ENCODE measurements at regions of chr4 and their contacts with region 1.

Region 1: DNA sequence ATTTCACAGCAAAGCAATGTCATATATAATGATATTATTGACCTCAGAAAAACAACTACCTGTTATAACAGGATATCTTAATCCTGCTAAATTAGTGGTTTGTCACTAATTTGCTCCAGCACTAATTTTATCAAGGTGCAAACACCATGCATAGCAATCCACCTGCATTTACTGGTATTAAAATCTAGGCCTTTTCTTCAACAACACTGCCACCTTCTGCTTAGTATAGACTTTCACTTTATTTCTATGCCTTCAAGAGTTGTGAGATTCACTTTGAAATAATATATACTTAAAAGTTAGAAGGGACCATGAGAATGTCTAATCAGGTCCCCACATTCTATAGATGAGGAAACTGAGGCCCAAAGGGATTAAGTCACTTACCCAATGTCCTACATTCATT is 82.1 kb upstream of the IQCM start:
- ATAC-seq: peak in 4 of 8 experiments; percentile 36 to 65 (median 48)
- H3K4me3 ChIP-seq: no peak overlapping the region
- H3K27ac ChIP-seq: no peak overlapping the region
- H3K4me1 ChIP-seq: peaks cover 0 to 8% of the 10 kb centered on the region in 2 donors

Region 2: DNA sequence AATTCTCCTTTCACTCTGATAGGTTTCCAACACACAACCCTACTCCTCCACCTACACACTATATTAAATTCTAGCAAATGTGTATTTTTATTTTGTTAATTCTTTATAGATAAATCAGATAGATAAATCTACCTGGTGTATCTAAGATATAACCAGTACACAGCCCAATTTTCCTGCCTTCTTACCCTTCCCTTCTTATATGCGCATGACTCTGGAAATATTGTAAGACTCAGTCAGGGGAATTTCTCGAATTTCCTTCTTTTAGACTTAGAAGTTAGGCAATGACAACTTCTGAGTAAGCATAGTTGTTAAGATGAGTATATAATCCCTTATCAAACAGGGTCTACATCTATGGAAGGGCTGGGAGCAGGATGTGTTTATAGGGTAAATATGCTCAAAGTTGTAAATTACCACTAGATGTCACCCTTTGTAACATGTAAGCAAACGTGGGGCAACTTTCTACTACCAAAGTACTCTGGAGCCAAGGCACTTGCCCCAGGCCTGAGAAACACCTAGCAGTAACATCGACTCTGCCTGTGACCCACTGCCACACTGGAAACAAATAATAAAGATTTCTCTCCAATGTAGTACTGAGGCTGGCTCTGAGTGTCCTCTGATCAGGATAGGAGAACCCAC is 526.9 kb before region 1 on chr4:
- in situ Hi-C with region 1: loop called in 3 of 9 experiments (anchors 10 to 25 kb)
- ATAC-seq: peak in 4 of 8 experiments; percentile 54 to 88 (median 84)
- H3K4me3 ChIP-seq: no peak overlapping the region
- H3K27ac ChIP-seq: no peak overlapping the region
- H3K4me1 ChIP-seq: no peaks in the 10 kb centered on the region

Region 3: GRCh38 chr4:149549911-149550310 is 347.9 kb before region 1 on chr4:
- in situ Hi-C with region 1: loop called in 1 of 9 experiments (anchors 25 kb)
- ATAC-seq: peak in 5 of 8 experiments; percentile 31 to 98 (median 63)
- H3K4me3 ChIP-seq: no peak overlapping the region
- H3K27ac ChIP-seq: no peak overlapping the region
- H3K4me1 ChIP-seq: no peaks in the 10 kb centered on the region